ENCODE measurements at regions of chr3 and their contacts with region 1.

Region 1: GRCh38 chr3:195894780-195895607 is 13.4 kb downstream of the TNK2 start:
- DNase-seq: no peak
- H3K4me3 ChIP-seq: peak overlapping the region; percentile 64 to 78 (median 74)
- H3K27ac ChIP-seq: peak overlapping the region; percentile 89 to 95 (median 93)
- H3K4me1 ChIP-seq: peaks cover 66 to 86% (median 83%) of the 10 kb centered on the region in 4 donors
- H3K27me3 ChIP-seq: no peaks in the 10 kb centered on the region
- CTCF ChIP-seq: peak; percentile 88 to 98 (median 93)
- EP300 ChIP-seq: no peak
- POLR2A ChIP-seq: no peak

Region 2: GRCh38 chr3:195727606-195728195 is 167.3 kb before region 1 on chr3:
- intact Hi-C with region 1: no loop called
- DNase-seq: no peak
- H3K4me3 ChIP-seq: no peak overlapping the region
- H3K27ac ChIP-seq: no peak overlapping the region
- H3K4me1 ChIP-seq: no peaks in the 10 kb centered on the region
- H3K27me3 ChIP-seq: peaks cover 0 to 27% (median 0%) of the 10 kb centered on the region in 4 donors
- CTCF ChIP-seq: no peak
- EP300 ChIP-seq: no peak
- POLR2A ChIP-seq: no peak

Region 3: GRCh38 chr3:195914648-195915473 is 19.9 kb after region 1 on chr3:
- intact Hi-C with region 1: loop called (anchors 2 kb)
- DNase-seq: peak; percentile 98
- H3K4me3 ChIP-seq: peak overlapping the region; percentile 15 to 25 (median 18)
- H3K27ac ChIP-seq: peak overlapping the region; percentile 87 to 89 (median 87)
- H3K4me1 ChIP-seq: peaks cover 10 to 26% (median 25%) of the 10 kb centered on the region in 4 donors
- H3K27me3 ChIP-seq: no peaks in the 10 kb centered on the region
- CTCF ChIP-seq: peak; percentile 95 to 96 (median 95)
- EP300 ChIP-seq: no peak
- POLR2A ChIP-seq: no peak

Measured in esophagus muscularis mucosa (tissue), 4 donors.